Activated CD4-positive, alpha-beta T cell treated with anti-CD3 and anti-CD28 coated beads for 36 hours (primary cell): ENCODE measurements at regions of chr3 and their contacts with region 1.

Region 1: DNA sequence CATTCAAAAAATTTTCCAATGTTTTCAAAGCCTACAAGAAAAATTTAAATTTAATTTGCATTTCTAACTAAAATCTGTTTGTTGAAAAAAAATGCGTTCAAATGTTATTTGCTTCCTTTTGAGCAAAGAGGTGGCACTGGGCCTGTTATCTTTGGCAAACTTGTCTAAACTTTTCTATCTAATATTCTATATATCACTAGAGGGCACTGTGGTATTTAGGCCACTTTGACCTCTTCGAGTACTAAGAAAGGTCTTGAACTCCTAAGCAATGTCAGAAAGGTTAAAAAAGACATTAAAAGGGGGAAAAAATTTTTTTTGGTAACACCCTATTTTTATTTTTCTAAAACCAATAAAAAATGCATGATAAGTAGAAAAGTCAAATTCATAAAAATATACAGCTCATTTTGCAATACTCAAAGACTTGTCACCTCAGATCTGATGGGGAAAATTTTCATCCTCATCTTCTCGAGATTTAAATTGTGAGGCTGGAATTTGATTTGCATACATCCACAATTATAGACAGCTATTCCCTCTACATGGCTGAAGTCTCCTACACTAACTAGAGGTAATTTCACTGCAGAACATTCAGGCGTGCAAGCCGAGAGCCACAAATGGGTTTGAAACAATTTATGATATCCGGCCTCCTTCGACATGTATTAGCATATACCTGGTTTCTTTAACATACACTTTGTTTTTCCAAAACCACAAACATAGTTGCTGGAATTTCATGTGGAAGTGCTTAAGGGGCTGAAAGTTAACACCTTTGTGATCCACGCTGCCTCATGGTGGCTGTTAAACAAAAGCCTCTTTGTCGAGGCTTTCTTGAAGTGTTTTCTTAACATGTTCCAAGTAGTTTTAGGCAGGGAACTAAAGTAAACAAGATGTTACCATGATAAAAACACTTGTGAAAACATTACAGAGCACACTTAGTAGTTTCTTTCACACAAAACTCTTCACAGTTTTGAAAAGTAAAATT is 576.4 kb downstream of the FOXP1 start:
- DNase-seq: no peak
- ATAC-seq: no peak
- H3K4me3 Mint-ChIP-seq: no peak overlapping the region
- H3K27ac Mint-ChIP-seq: peak overlapping the region; percentile 79
- H3K4me1 Mint-ChIP-seq: peaks cover 79% of the 10 kb centered on the region
- H3K27me3 Mint-ChIP-seq: no peaks in the 10 kb centered on the region

Region 2: DNA sequence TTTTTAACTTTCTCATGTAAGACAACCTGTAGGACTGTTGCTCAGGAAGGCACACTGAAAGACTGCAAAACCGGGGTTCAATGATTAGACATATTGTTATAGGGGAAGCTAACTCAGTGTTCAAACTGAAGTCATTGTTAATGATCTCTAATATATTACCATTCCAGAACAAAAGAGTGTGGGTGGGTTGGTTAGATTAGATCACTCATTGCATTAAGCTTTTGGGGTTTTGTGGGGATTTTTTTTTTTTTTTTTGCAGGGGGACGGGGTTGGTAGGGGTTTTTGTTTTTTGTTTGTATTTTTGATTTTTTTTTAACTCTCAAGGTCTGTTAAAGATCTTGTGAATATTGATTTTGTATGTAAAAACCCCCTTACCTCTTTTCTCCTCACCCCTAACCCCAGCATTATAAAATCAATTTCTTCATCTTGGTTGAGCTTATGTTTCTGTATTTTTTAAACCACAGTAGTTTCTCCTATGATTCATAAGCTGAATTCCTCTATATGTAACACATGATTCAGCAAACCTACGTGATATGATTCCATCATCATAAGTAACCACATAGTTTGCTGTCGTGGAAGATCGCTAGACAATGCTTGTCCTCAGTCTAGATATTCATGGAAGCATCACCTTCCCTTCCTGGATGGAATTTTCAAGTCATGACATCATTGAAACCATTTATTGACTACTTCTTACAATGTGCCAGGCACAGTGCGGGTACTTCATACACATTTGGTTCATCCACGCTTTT is 150.5 kb before region 1 on chr3:
- CTCF ChIA-PET with region 1: interaction called, 6 read pairs
- POLR2A ChIA-PET with region 1: no interaction called
- intact Hi-C with region 1: loop called in 1 of 2 experiments (anchors 5 kb)
- DNase-seq: peak; percentile 8
- ATAC-seq: peak; percentile 84
- H3K4me3 Mint-ChIP-seq: no peak overlapping the region
- H3K27ac Mint-ChIP-seq: no peak overlapping the region
- H3K4me1 Mint-ChIP-seq: peaks cover 24% of the 10 kb centered on the region
- H3K27me3 Mint-ChIP-seq: peaks cover 33% of the 10 kb centered on the region

Region 3: GRCh38 chr3:71022551-71023335 is 15.6 kb after region 1 on chr3:
- CTCF ChIA-PET with region 1: interaction called, 13 read pairs
- POLR2A ChIA-PET with region 1: no interaction called
- intact Hi-C with region 1: no loop called
- DNase-seq: no peak
- ATAC-seq: no peak
- H3K4me3 Mint-ChIP-seq: no peak overlapping the region
- H3K27ac Mint-ChIP-seq: peak overlapping the region; percentile 55
- H3K4me1 Mint-ChIP-seq: peaks cover 82% of the 10 kb centered on the region
- H3K27me3 Mint-ChIP-seq: no peaks in the 10 kb centered on the region

Region 4: GRCh38 chr3:71050538-71051258 is 43.6 kb after region 1 on chr3:
- CTCF ChIA-PET with region 1: interaction called, 3 read pairs
- POLR2A ChIA-PET with region 1: interaction called, 3 read pairs
- intact Hi-C with region 1: loop called (anchors 2 to 5 kb)
- DNase-seq: peak; percentile 65
- ATAC-seq: peak; percentile 87
- H3K4me3 Mint-ChIP-seq: peak overlapping the region; percentile 36
- H3K27ac Mint-ChIP-seq: peak overlapping the region; percentile 92
- H3K4me1 Mint-ChIP-seq: peaks cover 100% of the 10 kb centered on the region
- H3K27me3 Mint-ChIP-seq: no peaks in the 10 kb centered on the region

Region 5: DNA sequence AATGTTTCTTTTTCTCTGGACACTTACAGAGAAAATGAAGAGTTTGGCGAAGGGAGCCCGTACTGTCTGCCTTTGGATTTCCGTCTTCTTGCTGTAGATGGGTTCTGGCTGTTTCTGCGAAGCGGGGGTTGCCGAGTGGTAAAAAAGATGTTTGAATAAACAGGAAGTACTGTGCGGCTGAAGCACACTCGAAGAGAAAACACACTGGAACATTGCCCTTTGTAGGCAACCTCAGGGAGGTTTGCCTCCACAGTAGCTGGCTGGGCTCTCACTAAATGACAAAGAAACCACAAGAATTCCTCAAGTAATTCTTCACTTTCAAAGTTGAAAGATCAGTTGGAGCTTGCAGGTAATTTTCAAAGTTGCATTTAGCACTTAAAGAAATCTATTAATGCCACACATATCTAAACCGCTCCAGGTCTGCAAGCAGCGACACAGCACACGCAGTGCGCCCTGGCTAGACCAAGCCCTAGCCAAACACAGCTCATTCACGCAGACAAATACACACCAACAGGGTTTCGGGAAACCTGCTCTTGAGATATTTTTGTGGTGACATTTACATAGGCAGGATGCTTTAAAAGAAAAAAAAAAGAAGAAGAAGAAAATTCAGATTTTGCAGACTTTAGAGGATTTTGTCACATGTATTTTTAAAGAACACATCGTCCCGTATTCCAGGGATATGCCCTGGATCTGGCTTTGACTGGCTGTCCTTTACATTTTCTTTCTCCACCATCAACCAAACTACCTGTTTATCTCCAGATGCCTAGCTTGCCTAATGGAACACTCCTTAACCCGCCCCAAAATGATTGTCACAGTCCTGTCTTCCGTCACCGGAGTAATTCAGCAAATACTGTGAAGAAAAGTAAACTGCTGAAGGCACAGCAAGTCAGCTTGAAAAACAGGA is 123.6 kb after region 1 on chr3:
- CTCF ChIA-PET with region 1: no interaction called
- POLR2A ChIA-PET with region 1: no interaction called
- intact Hi-C with region 1: loop called (anchors 2 kb)
- DNase-seq: peak; percentile 82
- ATAC-seq: peak; percentile 61
- H3K4me3 Mint-ChIP-seq: peak overlapping the region; percentile 90
- H3K27ac Mint-ChIP-seq: peak overlapping the region; percentile 99
- H3K4me1 Mint-ChIP-seq: peaks cover 71% of the 10 kb centered on the region
- H3K27me3 Mint-ChIP-seq: no peaks in the 10 kb centered on the region

Region 6: DNA sequence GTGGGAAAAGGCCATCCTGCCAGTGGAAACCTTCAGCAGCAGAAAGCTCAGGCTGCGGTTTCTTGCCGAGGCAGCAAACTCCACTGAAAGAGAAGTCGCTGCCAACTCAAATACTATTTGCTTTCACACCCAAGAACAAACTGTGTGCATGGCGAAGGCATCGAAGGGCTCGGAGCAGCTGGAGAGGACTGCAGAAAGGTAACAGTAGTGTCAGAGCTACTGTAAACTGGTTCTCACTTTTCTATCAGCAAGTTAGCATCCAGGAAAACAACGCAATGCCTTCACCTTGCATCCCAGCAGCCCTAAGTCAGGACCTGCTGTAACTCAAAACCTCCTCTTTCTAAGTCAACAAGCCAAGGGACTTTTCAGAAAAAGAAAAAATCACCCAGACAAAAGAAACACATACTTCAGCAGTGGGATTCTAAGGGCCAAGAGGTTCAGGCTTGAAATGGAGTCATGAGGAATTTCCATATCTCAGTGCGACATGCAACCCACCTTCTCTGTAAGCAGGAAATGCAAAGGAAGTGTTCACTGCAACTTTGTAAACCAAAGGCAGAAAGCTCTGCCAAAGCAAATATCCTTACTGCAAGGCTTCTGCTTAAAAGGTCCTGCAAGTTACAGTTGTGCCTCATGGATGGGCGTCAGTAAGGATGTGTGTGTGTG is 382.9 kb after region 1 on chr3:
- CTCF ChIA-PET with region 1: no interaction called
- POLR2A ChIA-PET with region 1: no interaction called
- intact Hi-C with region 1: loop called in 1 of 2 experiments (anchors 2 kb)
- DNase-seq: peak; percentile 52
- ATAC-seq: peak; percentile 18
- H3K4me3 Mint-ChIP-seq: peak overlapping the region; percentile 52
- H3K27ac Mint-ChIP-seq: peak overlapping the region; percentile 69
- H3K4me1 Mint-ChIP-seq: peaks cover 78% of the 10 kb centered on the region
- H3K27me3 Mint-ChIP-seq: no peaks in the 10 kb centered on the region